IMR-90 (cell line): ENCODE measurements at regions of chr20 and their contacts with region 1.

Region 1: GRCh38 chr20:22586645-22587310 is 2.4 kb upstream of the FOXA2 start:
- DNase-seq: no peak
- ATAC-seq: no peak
- H3K4me3 ChIP-seq: no peak overlapping the region
- H3K27ac ChIP-seq: no peak overlapping the region
- H3K4me1 ChIP-seq: no peaks in the 10 kb centered on the region
- H3K27me3 ChIP-seq: peaks cover 59% of the 10 kb centered on the region
- CTCF ChIP-seq: no peak
- POLR2A ChIP-seq: no peak
- RAD21 ChIP-seq: peak; percentile 14; the same call in 1 of the 2 replicates

Region 2: GRCh38 chr20:22475662-22476061 is 111.1 kb before region 1 on chr20:
- CTCF ChIA-PET with region 1: no interaction called
- POLR2A ChIA-PET with region 1: no interaction called
- dilution Hi-C with region 1: no loop called
- in situ Hi-C with region 1: no loop called
- intact Hi-C with region 1: no loop called
- DNase-seq: no peak
- ATAC-seq: no peak
- H3K4me3 ChIP-seq: no peak overlapping the region
- H3K27ac ChIP-seq: no peak overlapping the region
- H3K4me1 ChIP-seq: no peaks in the 10 kb centered on the region
- H3K27me3 ChIP-seq: no peaks in the 10 kb centered on the region
- CTCF ChIP-seq: no peak
- POLR2A ChIP-seq: no peak
- RAD21 ChIP-seq: no peak

Region 3: DNA sequence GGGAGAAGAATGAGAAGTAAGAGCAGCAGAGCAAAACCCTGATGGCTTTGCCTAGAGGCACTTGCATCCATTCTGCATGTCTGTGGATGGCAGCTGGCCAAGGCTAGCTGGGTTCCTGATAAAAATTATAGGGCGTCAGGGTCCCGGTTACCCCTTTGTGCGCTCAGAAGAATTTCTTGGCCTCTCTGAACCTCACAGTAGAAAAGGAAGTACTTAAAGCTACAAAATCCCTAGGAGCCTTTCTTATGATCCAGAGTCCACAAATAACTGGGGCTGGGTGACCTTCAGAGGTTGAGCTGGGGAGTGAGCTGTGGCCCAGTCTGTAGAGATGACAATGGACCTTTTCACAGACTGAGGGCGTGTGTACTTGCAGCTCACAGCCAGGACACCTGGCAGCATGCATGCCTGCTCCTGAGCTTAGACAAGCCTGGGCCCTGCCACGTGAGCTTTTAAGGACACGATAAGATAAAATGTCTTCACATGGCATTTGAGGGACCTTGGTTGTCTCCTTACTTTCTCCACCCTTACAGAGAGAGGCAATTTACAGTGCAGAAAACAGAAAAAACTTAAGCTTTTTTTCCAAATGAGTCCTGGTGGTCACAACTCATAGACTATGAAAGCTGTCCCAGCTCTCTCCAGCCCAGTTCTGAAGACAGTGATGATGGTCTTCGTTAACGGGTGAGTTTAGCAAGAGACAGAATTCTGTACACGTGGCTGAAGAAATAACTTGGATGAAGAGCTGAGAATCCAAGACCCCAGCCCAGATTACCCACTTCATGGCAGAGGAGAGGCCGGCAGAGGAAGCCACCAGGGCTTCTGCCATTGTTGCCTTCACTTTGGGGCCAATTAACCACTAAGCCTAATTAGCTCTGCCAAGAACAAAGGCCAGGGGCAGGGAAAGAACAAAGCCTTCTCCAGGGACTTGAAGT is 52.7 kb before region 1 on chr20:
- CTCF ChIA-PET with region 1: no interaction called
- POLR2A ChIA-PET with region 1: no interaction called
- dilution Hi-C with region 1: no loop called
- in situ Hi-C with region 1: no loop called
- intact Hi-C with region 1: loop called (anchors 2 kb)
- DNase-seq: no peak
- ATAC-seq: no peak
- H3K4me3 ChIP-seq: no peak overlapping the region
- H3K27ac ChIP-seq: no peak overlapping the region
- H3K4me1 ChIP-seq: no peaks in the 10 kb centered on the region
- H3K27me3 ChIP-seq: no peaks in the 10 kb centered on the region
- CTCF ChIP-seq: no peak
- POLR2A ChIP-seq: no peak
- RAD21 ChIP-seq: no peak

Region 4: GRCh38 chr20:22546344-22546743 is 40.4 kb before region 1 on chr20:
- CTCF ChIA-PET with region 1: no interaction called
- POLR2A ChIA-PET with region 1: no interaction called
- dilution Hi-C with region 1: no loop called
- in situ Hi-C with region 1: no loop called
- intact Hi-C with region 1: no loop called
- DNase-seq: no peak
- ATAC-seq: no peak
- H3K4me3 ChIP-seq: no peak overlapping the region
- H3K27ac ChIP-seq: no peak overlapping the region
- H3K4me1 ChIP-seq: no peaks in the 10 kb centered on the region
- H3K27me3 ChIP-seq: no peaks in the 10 kb centered on the region
- CTCF ChIP-seq: no peak
- POLR2A ChIP-seq: no peak
- RAD21 ChIP-seq: no peak

Region 5: GRCh38 chr20:22663528-22664025 is 76.8 kb after region 1 on chr20:
- CTCF ChIA-PET with region 1: no interaction called
- POLR2A ChIA-PET with region 1: no interaction called
- dilution Hi-C with region 1: no loop called
- in situ Hi-C with region 1: no loop called
- intact Hi-C with region 1: no loop called
- DNase-seq: no peak
- ATAC-seq: no peak
- H3K4me3 ChIP-seq: no peak overlapping the region
- H3K27ac ChIP-seq: no peak overlapping the region
- H3K4me1 ChIP-seq: no peaks in the 10 kb centered on the region
- H3K27me3 ChIP-seq: no peaks in the 10 kb centered on the region; the same call in 1 of the 2 replicates
- CTCF ChIP-seq: no peak
- POLR2A ChIP-seq: no peak
- RAD21 ChIP-seq: no peak

Region 6: GRCh38 chr20:22916021-22916842 is 329.5 kb after region 1 on chr20:
- CTCF ChIA-PET with region 1: no interaction called
- POLR2A ChIA-PET with region 1: no interaction called
- dilution Hi-C with region 1: no loop called
- in situ Hi-C with region 1: no loop called
- intact Hi-C with region 1: no loop called
- DNase-seq: no peak
- ATAC-seq: no peak
- H3K4me3 ChIP-seq: no peak overlapping the region
- H3K27ac ChIP-seq: no peak overlapping the region
- H3K4me1 ChIP-seq: no peaks in the 10 kb centered on the region
- H3K27me3 ChIP-seq: peaks cover 5% of the 10 kb centered on the region; the same call in 1 of the 2 replicates
- CTCF ChIP-seq: no peak
- POLR2A ChIP-seq: no peak
- RAD21 ChIP-seq: no peak